ENCODE measurements at regions of chrX and their contacts with region 1.

Region 1: GRCh38 chrX:119067023-119067739 is 5.6 kb upstream of the CT47C1 start:
- DNase-seq: peak; percentile 82
- ATAC-seq: peak; percentile 81
- H3K4me3 ChIP-seq: no peak overlapping the region
- H3K27ac ChIP-seq: no peak overlapping the region
- H3K4me1 ChIP-seq: peaks cover 9% of the 10 kb centered on the region
- H3K27me3 ChIP-seq: no peaks in the 10 kb centered on the region
- CTCF ChIP-seq: peak; percentile 83

Region 2: GRCh38 chrX:118824173-118824730 is 242.9 kb before region 1 on chrX:
- CTCF ChIA-PET with region 1: interaction called, 10 read pairs
- POLR2A ChIA-PET with region 1: no interaction called
- intact Hi-C with region 1: no loop called
- DNase-seq: no peak
- ATAC-seq: no peak
- H3K4me3 ChIP-seq: peak overlapping the region; percentile 61
- H3K27ac ChIP-seq: no peak overlapping the region
- H3K4me1 ChIP-seq: peaks cover 6% of the 10 kb centered on the region; the same call in 1 of the 2 replicates
- H3K27me3 ChIP-seq: peaks cover 13% of the 10 kb centered on the region
- CTCF ChIP-seq: no peak

Region 3: DNA sequence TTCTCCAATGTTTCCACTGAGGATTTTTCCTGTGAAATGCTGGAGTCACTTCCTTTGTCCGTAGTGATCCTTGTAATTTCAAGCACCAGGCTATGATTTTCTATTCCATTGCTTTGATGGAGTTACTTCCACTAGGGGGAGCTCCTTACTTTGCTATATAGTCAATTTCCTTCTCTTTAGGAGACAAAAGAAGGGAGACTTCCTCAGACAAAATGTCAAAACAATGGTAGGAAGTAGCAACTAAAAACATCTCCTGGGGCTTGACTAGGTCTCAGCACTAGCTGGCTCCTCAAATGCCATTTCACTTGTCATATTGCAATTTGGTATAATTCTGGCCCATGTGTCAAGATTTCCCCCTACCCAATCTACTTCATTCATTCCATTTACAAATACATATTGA is 219.5 kb before region 1 on chrX:
- CTCF ChIA-PET with region 1: interaction called, 9 read pairs
- POLR2A ChIA-PET with region 1: no interaction called
- intact Hi-C with region 1: loop called (anchors 1 kb)
- DNase-seq: peak; percentile 80
- ATAC-seq: peak; percentile 81
- H3K4me3 ChIP-seq: no peak overlapping the region
- H3K27ac ChIP-seq: no peak overlapping the region
- H3K4me1 ChIP-seq: no peaks in the 10 kb centered on the region
- H3K27me3 ChIP-seq: no peaks in the 10 kb centered on the region
- CTCF ChIP-seq: peak; percentile 80

Region 4: DNA sequence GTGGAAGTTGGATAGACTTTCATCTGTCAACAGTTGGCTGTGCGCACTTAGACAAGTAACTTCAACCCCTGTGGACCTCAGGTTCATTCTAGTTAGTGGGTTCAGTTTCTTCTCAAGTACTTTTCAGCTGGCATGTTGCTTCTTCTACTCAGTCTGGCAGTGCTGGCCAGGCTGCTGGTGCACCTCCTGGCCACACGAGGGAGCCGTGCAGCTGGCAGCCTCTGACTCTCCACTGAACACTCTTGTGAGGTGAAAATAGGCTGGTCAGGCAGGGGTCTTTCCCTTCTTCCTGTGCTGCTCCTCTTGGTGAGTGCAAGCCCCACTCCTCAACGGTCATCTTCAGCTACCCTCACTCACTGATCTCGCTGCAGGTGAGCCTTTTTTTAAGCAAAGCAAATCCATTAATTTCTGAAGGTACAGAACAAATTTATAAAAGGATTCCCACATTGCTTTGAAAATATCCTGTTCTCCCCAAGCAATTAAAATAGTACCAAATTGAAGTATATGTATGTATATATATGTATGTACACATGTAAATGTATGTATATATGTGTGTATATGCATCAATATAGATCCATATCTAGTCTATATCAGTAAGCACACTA is 62.2 kb before region 1 on chrX:
- CTCF ChIA-PET with region 1: interaction called, 15 read pairs
- POLR2A ChIA-PET with region 1: no interaction called
- intact Hi-C with region 1: loop called (anchors 1 kb)
- DNase-seq: peak; percentile 62
- ATAC-seq: peak; percentile 89
- H3K4me3 ChIP-seq: no peak overlapping the region
- H3K27ac ChIP-seq: no peak overlapping the region
- H3K4me1 ChIP-seq: no peaks in the 10 kb centered on the region
- H3K27me3 ChIP-seq: no peaks in the 10 kb centered on the region
- CTCF ChIP-seq: peak; percentile 83

Region 5: GRCh38 chrX:119087121-119087520 is 19.9 kb after region 1 on chrX:
- CTCF ChIA-PET with region 1: interaction called, 12 read pairs
- POLR2A ChIA-PET with region 1: no interaction called
- intact Hi-C with region 1: no loop called
- DNase-seq: no peak
- ATAC-seq: no peak
- H3K4me3 ChIP-seq: no peak overlapping the region
- H3K27ac ChIP-seq: no peak overlapping the region
- H3K4me1 ChIP-seq: no peaks in the 10 kb centered on the region
- H3K27me3 ChIP-seq: no peaks in the 10 kb centered on the region
- CTCF ChIP-seq: no peak

Region 6: DNA sequence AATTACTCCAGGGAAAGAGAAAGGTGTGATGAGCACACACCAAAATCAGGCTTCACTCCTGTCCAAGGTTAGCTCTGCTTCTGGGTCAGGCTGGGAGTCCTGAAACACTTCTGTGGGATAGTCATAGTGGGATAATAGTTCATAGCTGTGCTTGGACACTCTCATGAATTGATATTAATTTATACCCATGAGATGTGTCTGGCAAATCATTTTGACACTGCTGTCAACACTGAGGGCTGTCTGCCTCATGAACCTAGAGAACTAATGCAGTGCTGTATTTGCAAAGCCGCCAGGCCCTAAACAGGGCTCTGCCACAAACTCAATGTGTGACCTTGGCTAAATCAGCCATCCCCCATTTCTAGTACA is 144.5 kb after region 1 on chrX:
- CTCF ChIA-PET with region 1: no interaction called
- POLR2A ChIA-PET with region 1: no interaction called
- intact Hi-C with region 1: loop called (anchors 5 kb)
- DNase-seq: no peak
- ATAC-seq: no peak
- H3K4me3 ChIP-seq: no peak overlapping the region
- H3K27ac ChIP-seq: no peak overlapping the region
- H3K4me1 ChIP-seq: no peaks in the 10 kb centered on the region
- H3K27me3 ChIP-seq: peaks cover 23% of the 10 kb centered on the region
- CTCF ChIP-seq: no peak